Activated naive CD4-positive, alpha-beta T cell treated with anti-CD3 and anti-CD28 coated beads for 36 hours (primary cell): ENCODE measurements at regions of chr20 and their contacts with region 1.

Region 1: DNA sequence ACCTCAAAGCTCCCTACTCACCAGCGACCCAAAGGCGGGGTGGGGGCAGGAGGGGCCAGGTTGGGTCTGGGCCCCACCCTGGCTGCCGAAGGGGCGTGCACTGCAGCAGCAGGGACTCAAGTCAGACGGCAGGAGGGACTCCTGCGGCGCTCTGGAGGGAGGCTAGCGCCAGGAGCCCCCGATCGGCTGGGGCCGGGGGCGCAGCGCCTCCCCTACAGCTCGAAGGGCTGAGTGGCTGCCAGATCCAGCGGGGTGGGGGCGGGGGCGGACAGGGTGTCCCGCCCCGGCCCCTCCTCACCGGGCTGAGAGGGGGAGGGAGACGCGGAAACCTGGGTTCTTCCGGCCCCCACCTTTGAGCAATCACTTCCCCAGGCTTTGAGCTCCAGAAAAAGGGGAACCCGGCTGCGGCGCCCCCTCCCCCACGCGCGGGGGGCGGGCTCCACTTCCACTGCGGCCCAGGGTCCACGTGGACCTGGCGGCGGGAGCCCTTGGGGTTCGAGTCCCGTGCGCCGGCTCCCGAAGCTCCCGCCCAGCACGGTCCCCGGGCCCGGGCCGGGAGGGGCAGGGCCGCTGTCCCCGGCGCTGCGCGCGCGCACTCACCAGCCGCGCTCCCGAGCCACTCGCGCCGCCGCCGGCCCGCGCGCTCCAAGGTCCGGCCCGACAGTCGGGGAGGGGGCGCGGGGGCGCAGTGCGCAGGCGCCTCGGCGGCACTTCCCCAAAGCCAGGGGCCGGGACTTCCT is at the start of gene RGS19:
- DNase-seq: peak; percentile 73
- H3K4me3 Mint-ChIP-seq: peak within 1 kb of the TSS; percentile 87
- H3K27ac Mint-ChIP-seq: peak within 1 kb of the TSS; percentile 82
- H3K4me1 Mint-ChIP-seq: peaks cover 38% of the 10 kb centered on the region
- H3K27me3 Mint-ChIP-seq: peaks cover 3% of the 10 kb centered on the region
- total RNA-seq, gene RGS19: 20.6 to 23.5 TPM

Region 2: DNA sequence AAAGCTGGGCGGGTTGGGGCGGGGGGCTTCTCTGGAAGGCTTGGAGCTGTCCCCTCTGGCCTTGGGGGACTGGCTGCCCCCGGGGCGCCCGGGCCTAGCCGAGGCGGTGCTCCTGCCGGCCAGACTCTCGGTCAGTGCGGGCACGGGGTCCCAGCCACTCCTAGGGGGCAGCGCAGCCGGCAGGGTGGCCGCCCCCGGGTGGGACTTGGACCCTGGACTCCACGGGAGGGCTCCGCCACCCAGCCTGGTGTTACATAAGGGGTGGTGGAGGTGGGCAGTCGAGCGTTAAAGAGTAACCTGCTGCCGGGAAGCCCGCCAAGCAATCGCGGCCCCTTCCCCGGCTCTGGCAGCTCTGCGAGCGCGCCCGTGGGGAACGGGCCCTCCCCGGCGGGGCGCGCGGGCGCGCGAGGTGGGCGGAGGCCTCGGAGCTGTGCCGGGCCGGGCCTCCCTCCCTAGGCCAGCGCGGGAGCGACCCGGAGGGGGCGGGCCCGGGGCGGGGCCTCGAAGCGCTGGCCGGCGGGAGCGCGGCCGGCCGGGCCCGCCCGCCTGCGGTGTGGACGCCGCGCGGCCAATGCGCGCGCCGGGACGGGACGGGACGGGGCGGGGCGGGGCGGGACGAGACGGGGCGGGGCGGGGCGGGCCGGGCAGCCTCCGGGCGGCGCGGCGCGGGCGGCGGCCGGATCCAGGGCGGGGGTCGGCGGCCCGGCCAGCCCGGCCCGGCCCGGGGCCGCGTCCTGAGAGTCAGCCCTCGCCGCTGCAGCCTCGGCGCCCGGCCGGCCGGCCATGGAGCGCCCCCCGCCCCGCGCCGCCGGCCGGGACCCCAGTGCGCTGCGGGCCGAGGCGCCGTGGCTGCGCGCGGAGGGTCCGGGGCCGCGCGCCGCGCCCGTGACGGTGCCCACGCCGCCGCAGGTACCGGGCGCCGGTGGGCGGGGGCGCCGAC is 340.0 kb before region 1 on chr20 and contains the start of gene SLC2A4RG:
- CTCF ChIA-PET with region 1: no interaction called
- intact Hi-C with region 1: loop called (anchors 5 kb)
- DNase-seq: peak; percentile 58
- H3K4me3 Mint-ChIP-seq: peak within 1 kb of the TSS; percentile 50
- H3K27ac Mint-ChIP-seq: no peak within 1 kb of the TSS
- H3K4me1 Mint-ChIP-seq: peaks cover 22% of the 10 kb centered on the region
- H3K27me3 Mint-ChIP-seq: no peaks in the 10 kb centered on the region
- total RNA-seq, gene SLC2A4RG: 22.4 to 24.8 TPM

Region 3: GRCh38 chr20:64038565-64039292 is 40.7 kb before region 1 on chr20:
- CTCF ChIA-PET with region 1: interaction called, 13 read pairs
- intact Hi-C with region 1: loop called (anchors 2 kb)
- DNase-seq: peak; percentile 84
- H3K4me3 Mint-ChIP-seq: peak overlapping the region; percentile 67
- H3K27ac Mint-ChIP-seq: no peak overlapping the region
- H3K4me1 Mint-ChIP-seq: peaks cover 53% of the 10 kb centered on the region
- H3K27me3 Mint-ChIP-seq: peaks cover 2% of the 10 kb centered on the region

Region 4: GRCh38 chr20:64062596-64063388 is 16.7 kb before region 1 on chr20 and contains the start of gene TCEA2:
- CTCF ChIA-PET with region 1: interaction called, 5 read pairs
- intact Hi-C with region 1: loop called (anchors 1 kb)
- DNase-seq: peak; percentile 98
- H3K4me3 Mint-ChIP-seq: peak within 1 kb of the TSS; percentile 89
- H3K27ac Mint-ChIP-seq: peak within 1 kb of the TSS; percentile 54
- H3K4me1 Mint-ChIP-seq: peaks cover 47% of the 10 kb centered on the region
- H3K27me3 Mint-ChIP-seq: no peaks in the 10 kb centered on the region
- total RNA-seq, gene TCEA2: 16.7 to 18.2 TPM

Region 5: DNA sequence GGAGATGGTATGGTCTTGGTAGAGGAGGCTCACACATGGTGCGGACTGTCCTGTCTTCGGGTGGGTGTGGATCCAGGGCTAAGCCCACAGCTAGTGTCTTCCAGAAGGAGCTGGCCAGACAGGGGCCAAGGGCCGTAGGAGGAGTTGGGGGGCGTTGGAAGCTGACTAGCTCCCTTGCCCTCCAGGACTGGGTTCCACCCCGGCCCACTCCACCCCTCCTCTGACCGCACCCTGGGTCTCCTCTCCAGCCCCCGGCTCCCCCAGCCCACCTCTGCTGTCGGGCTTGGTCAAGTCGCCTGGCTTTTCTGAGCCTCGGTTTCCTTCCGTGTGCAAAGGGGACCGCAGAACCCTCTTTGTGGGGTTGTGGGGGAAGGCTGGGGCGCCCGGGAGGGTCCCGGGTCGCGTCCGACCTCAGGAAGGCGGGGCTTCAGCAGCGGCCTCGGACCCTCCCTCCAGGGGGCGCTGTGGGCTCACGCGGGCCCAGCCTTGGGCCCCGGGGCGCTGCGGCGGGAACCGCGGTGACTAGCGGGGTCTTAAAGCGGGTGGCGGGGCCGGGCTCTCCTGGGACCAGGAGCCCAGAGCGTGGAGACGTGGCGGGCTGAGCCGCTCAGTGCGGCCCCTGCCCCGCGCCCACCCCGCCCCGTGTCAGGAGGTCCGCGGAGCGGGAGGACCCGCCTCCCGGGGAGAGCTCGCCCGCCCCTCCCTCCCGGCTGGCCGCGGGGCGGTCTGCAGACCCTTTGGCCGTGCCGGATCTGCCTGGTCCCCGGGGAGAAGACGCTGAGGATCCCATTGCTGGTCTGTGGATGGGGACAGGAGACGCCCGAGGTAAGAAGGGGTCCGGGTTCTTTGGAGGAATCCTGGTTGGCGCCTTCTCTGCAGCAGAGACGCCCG is 22.5 kb after region 1 on chr20:
- CTCF ChIA-PET with region 1: interaction called, 6 read pairs
- intact Hi-C with region 1: loop called (anchors 2 kb)
- DNase-seq: peak; percentile 70
- H3K4me3 Mint-ChIP-seq: no peak overlapping the region
- H3K27ac Mint-ChIP-seq: no peak overlapping the region
- H3K4me1 Mint-ChIP-seq: peaks cover 12% of the 10 kb centered on the region
- H3K27me3 Mint-ChIP-seq: peaks cover 16% of the 10 kb centered on the region

Region 6: GRCh38 chr20:64119681-64120341 is 40.4 kb after region 1 on chr20:
- CTCF ChIA-PET with region 1: interaction called, 47 read pairs
- intact Hi-C with region 1: loop called (anchors 1 kb)
- DNase-seq: no peak
- H3K4me3 Mint-ChIP-seq: no peak overlapping the region
- H3K27ac Mint-ChIP-seq: peak overlapping the region; percentile 72
- H3K4me1 Mint-ChIP-seq: peaks cover 8% of the 10 kb centered on the region
- H3K27me3 Mint-ChIP-seq: no peaks in the 10 kb centered on the region

Region 7: GRCh38 chr20:64255361-64256281 is 176.2 kb after region 1 on chr20 and contains the start of gene PCMTD2:
- CTCF ChIA-PET with region 1: interaction called, 3 read pairs
- intact Hi-C with region 1: loop called (anchors 5 kb)
- DNase-seq: peak; percentile 88
- H3K4me3 Mint-ChIP-seq: peak within 1 kb of the TSS; percentile 87
- H3K27ac Mint-ChIP-seq: peak within 1 kb of the TSS; percentile 87
- H3K4me1 Mint-ChIP-seq: peaks cover 47% of the 10 kb centered on the region
- H3K27me3 Mint-ChIP-seq: peaks cover 3% of the 10 kb centered on the region
- total RNA-seq, gene PCMTD2: 34.5 to 36.7 TPM